Right ventricle myocardium inferior (tissue), 1 donor: ENCODE measurements at regions of chr6 and their contacts with region 1.

Region 1: DNA sequence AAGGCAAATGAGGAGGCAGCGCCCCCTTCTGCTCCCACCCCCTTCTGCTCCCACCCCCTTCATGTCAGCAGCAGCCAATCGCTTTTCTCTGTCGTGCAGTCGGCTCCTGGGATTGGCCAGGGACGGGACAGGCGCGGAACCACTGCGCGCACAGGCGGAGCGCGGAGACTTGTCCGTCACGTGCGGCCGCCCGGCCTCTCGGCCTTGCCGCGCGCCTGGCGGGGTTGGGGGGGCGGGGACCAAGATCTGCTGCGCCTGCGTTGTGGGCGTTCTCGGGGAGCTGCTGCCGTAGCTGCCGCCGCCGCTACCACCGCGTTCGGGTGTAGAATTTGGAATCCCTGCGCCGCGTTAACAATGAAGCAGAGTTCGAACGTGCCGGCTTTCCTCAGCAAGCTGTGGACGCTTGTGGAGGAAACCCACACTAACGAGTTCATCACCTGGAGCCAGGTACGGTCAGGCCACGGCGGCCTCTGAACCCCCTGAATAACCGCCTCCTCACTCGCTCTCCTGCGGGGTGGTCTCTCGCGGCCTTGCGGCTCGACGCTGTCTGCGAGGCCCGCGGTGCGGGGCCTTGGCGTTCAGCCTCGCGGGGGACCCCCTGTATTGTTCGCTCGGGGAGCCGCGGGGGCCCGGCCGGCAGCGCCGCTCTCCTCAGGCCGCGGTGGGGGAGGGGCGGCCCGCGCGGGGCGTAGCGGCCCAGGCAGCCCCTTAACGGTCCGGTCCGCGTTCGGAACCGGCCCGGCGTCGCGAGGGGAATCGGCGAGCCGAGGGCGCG is at the start of gene HSF2:
- DNase-seq: peak; percentile 97
- ATAC-seq: peak; percentile 99
- total RNA-seq, gene HSF2: 23.3 TPM

Region 2: DNA sequence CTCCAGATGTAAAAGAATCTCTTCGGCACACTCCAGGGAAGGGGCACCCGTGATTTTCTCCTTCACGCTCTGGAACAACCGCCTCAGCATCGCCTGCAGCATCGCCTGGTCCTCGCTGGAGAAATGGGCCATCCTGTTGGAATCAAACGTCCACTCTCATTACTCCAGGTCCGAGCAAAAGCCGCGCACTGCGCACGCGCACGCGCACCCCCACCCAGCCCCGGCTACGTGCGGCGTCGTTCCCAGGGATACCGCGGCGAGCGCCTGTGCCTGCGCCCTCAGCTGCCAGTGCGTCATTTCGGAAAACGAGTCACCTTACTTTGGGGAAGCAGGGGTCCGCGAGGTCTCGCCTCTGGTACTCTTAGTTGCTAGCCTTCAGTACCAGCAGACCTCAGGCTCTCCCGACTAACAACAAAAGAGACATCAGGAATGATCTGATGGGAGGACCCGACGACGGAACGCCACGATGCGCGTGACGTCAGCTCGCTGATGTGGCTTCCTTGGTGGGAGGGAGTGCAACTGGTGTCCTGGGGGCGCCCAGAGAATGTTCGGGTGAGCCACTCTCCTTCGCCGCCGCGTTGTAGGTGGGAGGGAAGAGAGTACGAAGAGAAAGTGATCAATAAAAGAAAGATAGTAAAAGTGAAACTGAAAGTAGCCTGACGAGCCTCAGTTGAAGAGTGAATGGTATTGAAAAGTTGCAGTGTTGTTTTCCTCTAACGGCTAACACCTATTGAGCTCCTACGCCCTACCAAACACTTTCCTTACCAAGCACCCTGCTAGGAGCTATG is 1065.1 kb before region 1 on chr6 and contains the start of gene TBC1D32:
- intact Hi-C with region 1: loop called (anchors 10 kb)
- DNase-seq: peak; percentile 94
- ATAC-seq: peak; percentile 100
- total RNA-seq, gene TBC1D32: 3.1 TPM

Region 3: GRCh38 chr6:122008101-122008999 is 391.2 kb before region 1 on chr6:
- intact Hi-C with region 1: no loop called
- DNase-seq: no peak
- ATAC-seq: peak; percentile 97

Region 4: DNA sequence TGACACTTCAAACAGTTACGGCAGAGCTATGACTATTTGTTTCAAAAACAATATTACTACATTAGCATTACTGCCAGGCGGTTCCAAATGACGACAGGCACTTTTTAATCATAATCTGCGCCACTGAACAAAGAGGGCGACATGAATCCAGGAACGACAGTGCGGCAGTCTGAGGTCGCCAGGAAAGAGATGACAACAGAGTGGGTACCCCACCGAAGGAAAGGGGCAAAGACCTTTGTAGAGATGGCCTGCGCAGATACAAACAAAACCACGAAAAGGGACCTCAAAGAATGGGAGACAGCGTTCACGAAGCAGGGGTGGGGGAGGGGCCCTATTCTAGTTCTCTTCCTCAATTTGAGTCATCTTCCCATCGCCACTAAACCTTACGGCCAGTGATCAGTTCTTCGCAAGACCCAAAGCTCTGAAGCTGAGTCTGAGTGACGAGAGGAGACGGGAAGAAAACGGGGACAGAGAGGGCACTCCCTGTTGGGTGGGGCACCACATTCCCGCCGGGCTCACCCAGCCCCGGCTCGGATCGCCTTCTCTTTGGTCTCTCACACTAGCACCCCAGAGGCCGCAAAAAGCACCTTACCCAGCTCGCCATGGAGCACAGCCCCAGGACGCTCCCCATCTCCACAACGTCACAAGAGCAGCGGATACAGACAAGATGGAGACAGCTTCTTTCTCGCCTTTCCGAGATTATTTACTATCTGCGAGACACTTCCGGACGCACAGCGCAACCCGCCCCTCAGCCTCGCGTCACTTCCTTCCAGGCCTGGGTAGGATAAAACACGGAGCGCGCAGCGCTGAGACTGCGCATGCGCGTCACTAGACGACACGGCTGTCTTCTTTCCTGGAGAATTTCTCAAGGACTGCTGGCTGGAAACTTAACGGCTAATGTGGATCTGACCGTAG is 71.8 kb after region 1 on chr6 and contains the start of gene SERINC1:
- intact Hi-C with region 1: loop called (anchors 1 kb)
- DNase-seq: peak; percentile 97
- ATAC-seq: peak; percentile 99
- total RNA-seq, gene SERINC1: 155 TPM

Region 5: GRCh38 chr6:122609856-122610689 is 210.5 kb after region 1 on chr6 and contains the start of gene PKIB:
- intact Hi-C with region 1: no loop called
- DNase-seq: peak; percentile 78
- ATAC-seq: peak; percentile 96
- total RNA-seq, gene PKIB: not detected